Activated T-helper 2 cell treated with anti-CD3 and anti-CD28 coated beads, Interferon-gamma antibody, Interleukin-2, Interleukin-4, amounts not matched to agents 10 μg/mL and 5 μg/mL and 100 μg/mL, durations not matched to agents 14 hours and 24 hours and 36 hours (primary cell): ENCODE measurements at regions of chr7 and their contacts with region 1.

Region 1: GRCh38 chr7:112206238-112207044 is at the starts of genes DOCK4 and ZNF277:
- DNase-seq: peak; percentile 98
- H3K4me3 Mint-ChIP-seq: peak within 1 kb of the TSS; percentile 92
- H3K27ac Mint-ChIP-seq: peak within 1 kb of the TSS; percentile 78
- H3K4me1 Mint-ChIP-seq: peaks cover 22% of the 10 kb centered on the region
- H3K27me3 Mint-ChIP-seq: peaks cover 33% of the 10 kb centered on the region
- total RNA-seq, gene DOCK4: 0.41 and 0.64 TPM in 2 replicates
- total RNA-seq, gene ZNF277: 11.6 and 13.0 TPM in 2 replicates

Region 2: DNA sequence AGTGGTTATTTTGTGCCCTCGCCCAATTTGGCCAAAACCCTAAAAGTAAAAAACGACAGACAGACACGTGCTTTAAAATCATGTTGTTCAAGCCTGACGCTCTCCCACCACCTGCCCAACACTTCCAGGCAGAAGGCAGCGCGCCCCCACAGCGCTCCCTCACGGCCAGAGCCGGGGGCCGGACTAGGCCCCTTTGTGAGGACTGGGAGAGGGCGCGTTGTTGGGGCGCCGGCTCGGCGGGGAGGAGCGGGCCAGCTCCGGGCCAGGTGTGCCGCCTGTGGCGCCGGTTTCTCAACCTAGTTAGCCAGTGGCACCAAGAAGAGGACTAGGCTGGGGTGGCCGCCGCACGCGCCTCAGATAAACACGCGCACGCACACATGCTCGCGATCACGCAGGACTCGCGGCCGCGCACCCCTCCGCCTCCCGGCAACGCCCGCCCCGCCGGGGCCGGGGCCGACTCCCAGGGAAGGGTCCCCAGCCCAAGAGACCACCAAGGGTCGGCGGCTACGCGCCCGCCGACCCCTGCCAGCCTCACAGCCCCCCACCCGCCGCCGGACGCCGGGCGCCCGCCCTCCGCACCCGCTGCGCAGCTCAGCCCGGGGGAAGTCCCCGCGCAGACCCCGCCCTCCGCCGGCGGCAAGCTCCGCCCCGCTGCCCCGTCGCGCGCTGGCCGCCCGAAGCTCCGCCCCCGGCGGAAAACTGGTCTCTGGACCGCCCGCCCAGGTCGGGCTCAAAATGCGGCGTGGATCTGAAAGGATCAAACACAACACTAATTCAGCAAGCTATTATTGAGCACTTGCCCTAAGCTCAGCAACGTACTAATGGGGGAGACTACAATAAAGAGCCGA is 644.3 kb before region 1 on chr7 and contains the start of gene IMMP2L:
- intact Hi-C with region 1: loop called (anchors 10 kb)
- DNase-seq: peak; percentile 89
- H3K4me3 Mint-ChIP-seq: peak within 1 kb of the TSS; percentile 87
- H3K27ac Mint-ChIP-seq: peak within 1 kb of the TSS; percentile 85
- H3K4me1 Mint-ChIP-seq: peaks cover 31% of the 10 kb centered on the region
- H3K27me3 Mint-ChIP-seq: peaks cover 9% of the 10 kb centered on the region
- total RNA-seq, gene IMMP2L: 12.4 and 20.0 TPM in 2 replicates

Region 3: GRCh38 chr7:112390167-112390566 is 183.7 kb after region 1 on chr7:
- intact Hi-C with region 1: loop called (anchors 2 kb)
- DNase-seq: no peak
- H3K4me3 Mint-ChIP-seq: no peak overlapping the region
- H3K27ac Mint-ChIP-seq: no peak overlapping the region
- H3K4me1 Mint-ChIP-seq: peaks cover 11% of the 10 kb centered on the region
- H3K27me3 Mint-ChIP-seq: peaks cover 25% of the 10 kb centered on the region

Region 4: GRCh38 chr7:112789817-112790585 is 583.6 kb after region 1 on chr7 and contains the start of gene TMEM168:
- intact Hi-C with region 1: loop called (anchors 5 kb)
- DNase-seq: peak; percentile 79
- H3K4me3 Mint-ChIP-seq: peak within 1 kb of the TSS; percentile 93
- H3K27ac Mint-ChIP-seq: peak within 1 kb of the TSS; percentile 86
- H3K4me1 Mint-ChIP-seq: peaks cover 31% of the 10 kb centered on the region
- H3K27me3 Mint-ChIP-seq: no peaks in the 10 kb centered on the region
- total RNA-seq, gene TMEM168: 16.3 and 17.7 TPM in 2 replicates

Region 5: GRCh38 chr7:113118074-113118959 is 911.9 kb after region 1 on chr7 and contains the start of gene SMIM30:
- intact Hi-C with region 1: loop called (anchors 1 kb)
- DNase-seq: peak; percentile 82
- H3K4me3 Mint-ChIP-seq: peak within 1 kb of the TSS; percentile 94
- H3K27ac Mint-ChIP-seq: peak within 1 kb of the TSS; percentile 94
- H3K4me1 Mint-ChIP-seq: peaks cover 42% of the 10 kb centered on the region
- H3K27me3 Mint-ChIP-seq: no peaks in the 10 kb centered on the region
- total RNA-seq, gene SMIM30: 43.5 and 45.6 TPM in 2 replicates